ENCODE measurements at regions of chr1 and their contacts with region 1.

Region 1: DNA sequence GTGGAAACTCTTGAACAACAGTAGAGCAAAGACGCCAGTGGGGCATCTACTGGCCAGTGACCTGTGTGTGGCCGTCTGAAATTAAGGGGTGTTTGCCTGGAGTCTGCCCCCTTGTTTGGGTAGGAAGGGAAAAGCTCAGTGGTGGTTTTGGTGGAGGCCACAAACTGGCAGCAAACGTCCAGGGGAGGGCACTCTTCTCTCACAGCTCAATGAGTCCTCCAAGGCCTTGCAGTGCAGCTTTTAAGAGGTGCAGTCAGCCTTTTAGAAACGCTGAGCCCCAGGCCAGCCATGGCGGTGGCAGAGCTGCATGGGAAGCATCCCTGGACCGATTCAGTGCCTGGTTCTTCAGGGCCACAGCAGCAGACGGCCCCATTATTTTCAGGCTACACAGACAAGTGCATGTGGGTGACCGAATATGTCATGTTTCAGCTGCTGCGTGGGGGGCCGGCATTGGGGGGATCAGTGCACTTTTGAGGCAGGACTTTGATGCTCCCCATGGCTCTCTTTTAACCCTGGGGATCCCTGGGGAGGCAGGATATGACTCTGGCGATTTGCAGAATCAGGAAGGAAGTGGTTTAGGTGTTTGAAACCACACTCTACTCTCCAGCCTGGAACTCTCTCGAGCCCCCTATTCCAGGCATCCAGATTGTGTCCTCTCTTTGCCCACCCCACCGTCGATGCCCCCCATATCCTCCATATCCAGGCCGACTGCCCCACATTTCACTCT is 414.0 kb downstream of the PRDM2 start:
- DNase-seq: peak; percentile 52
- H3K4me3 ChIP-seq: no peak overlapping the region
- H3K27ac ChIP-seq: no peak overlapping the region
- H3K4me1 ChIP-seq: no peaks in the 10 kb centered on the region
- H3K27me3 ChIP-seq: no peaks in the 10 kb centered on the region
- CTCF ChIP-seq: peak; percentile 63 to 86

Region 2: DNA sequence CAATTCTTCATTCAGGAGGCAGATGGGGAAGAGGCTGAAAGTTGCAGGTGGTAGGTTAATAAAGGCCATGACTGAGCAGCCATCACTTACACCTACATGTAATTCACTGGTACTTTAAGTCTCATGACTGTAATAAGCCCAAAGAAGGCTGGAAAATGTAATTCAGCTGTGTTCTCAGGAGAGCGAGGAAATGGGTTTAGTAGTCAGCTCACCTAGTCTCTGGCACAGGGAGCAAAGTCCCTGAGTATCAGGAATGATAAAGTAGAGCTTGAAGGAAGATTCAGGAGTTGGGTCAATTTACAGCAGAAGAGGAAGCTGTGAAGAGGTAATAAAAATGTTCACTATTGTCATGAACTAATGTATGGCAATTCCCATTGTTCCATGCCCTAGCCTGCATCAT is 91.1 kb after region 1 on chr1:
- CTCF ChIA-PET with region 1: no interaction called
- dilution Hi-C with region 1: no loop called
- in situ Hi-C with region 1: no loop called
- intact Hi-C with region 1: no loop called
- DNase-seq: no peak
- H3K4me3 ChIP-seq: no peak overlapping the region
- H3K27ac ChIP-seq: no peak overlapping the region
- H3K4me1 ChIP-seq: no peaks in the 10 kb centered on the region
- H3K27me3 ChIP-seq: no peaks in the 10 kb centered on the region
- CTCF ChIP-seq: no peak

Region 3: DNA sequence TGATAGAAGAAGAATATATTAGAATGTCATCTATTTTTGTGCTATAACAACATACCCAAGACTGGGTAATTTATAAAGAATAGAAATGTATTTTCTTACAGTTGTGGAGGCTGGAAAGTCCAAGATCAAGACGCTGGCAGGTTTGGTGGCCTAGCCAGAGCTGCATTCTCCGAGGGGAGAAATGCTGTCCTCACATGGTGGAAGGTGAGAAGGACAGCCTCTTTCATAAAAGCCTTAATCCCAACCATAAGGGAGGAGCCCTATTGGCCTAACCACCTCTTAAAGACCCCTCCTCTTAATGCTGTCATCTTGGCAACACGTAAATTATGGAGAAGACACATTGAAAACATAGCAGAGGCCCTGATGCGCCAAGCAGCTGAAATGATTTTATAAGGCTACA is 424.3 kb after region 1 on chr1:
- CTCF ChIA-PET with region 1: no interaction called
- dilution Hi-C with region 1: no loop called
- in situ Hi-C with region 1: no loop called
- intact Hi-C with region 1: loop called (anchors 1 kb)
- DNase-seq: no peak
- H3K4me3 ChIP-seq: no peak overlapping the region
- H3K27ac ChIP-seq: no peak overlapping the region
- H3K4me1 ChIP-seq: no peaks in the 10 kb centered on the region
- H3K27me3 ChIP-seq: no peaks in the 10 kb centered on the region
- CTCF ChIP-seq: peak; percentile 24 to 40

Region 4: GRCh38 chr1:14598497-14599172 is 484.6 kb after region 1 on chr1 and contains the start of gene KAZN:
- CTCF ChIA-PET with region 1: no interaction called
- dilution Hi-C with region 1: no loop called
- in situ Hi-C with region 1: no loop called
- intact Hi-C with region 1: loop called (anchors 5 kb)
- DNase-seq: no peak
- H3K4me3 ChIP-seq: peak within 1 kb of the TSS in 2 of 3 experiments; percentile 8 to 27
- H3K27ac ChIP-seq: no peak within 1 kb of the TSS
- H3K4me1 ChIP-seq: peaks cover 10% of the 10 kb centered on the region
- H3K27me3 ChIP-seq: peaks cover 26% of the 10 kb centered on the region
- CTCF ChIP-seq: no peak
- total RNA-seq, gene KAZN: 13.8 to 17.6 TPM

Region 5: DNA sequence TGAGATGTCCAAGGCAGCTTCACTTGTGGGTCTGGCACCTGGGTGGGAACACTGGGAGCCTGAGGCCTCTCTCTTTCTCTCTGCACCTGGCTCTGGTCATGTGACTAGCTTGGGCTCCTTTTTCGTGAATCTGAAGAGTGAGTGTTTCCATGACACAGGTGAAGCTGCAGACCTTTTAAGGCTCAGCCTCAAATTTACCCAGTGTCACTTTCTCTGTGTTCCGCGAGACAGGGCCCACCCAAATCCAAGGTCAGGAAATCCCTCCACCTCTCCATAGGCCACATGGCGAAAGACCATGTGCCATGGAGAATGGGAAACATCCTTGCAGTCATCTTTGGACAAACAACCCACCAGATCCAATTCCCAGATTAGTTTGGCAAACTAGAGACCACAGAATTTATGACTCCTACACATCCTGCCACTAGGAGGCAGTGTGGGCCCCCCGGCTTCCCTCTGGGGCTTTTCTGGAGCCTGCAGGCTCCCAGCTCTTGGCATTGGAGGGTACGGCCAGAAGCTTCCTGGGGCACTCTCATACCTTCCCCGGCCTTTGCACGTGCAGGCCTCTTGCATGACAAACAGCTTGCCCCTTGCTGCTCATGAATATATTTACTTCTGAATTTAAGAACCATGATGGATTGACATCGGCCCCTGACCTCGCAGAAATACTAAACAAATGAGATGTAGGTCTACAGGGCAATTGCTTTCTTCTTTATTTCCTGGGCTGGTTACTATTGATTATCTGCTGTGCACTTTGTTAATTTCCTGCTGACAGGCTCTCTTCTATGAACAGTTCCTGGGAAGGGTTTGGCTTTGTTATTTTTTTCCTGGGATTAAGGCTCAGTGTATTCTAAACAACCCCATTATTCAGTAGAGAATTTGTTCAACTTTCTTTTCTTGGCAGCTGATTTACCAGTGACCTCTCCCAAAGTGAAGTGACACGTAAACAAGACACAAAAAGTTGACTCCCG is 665.2 kb after region 1 on chr1:
- CTCF ChIA-PET with region 1: no interaction called
- dilution Hi-C with region 1: no loop called
- in situ Hi-C with region 1: no loop called
- intact Hi-C with region 1: loop called (anchors 5 kb)
- DNase-seq: no peak
- H3K4me3 ChIP-seq: no peak overlapping the region
- H3K27ac ChIP-seq: no peak overlapping the region
- H3K4me1 ChIP-seq: no peaks in the 10 kb centered on the region
- H3K27me3 ChIP-seq: no peaks in the 10 kb centered on the region
- CTCF ChIP-seq: peak; percentile 72 to 78

Region 6: DNA sequence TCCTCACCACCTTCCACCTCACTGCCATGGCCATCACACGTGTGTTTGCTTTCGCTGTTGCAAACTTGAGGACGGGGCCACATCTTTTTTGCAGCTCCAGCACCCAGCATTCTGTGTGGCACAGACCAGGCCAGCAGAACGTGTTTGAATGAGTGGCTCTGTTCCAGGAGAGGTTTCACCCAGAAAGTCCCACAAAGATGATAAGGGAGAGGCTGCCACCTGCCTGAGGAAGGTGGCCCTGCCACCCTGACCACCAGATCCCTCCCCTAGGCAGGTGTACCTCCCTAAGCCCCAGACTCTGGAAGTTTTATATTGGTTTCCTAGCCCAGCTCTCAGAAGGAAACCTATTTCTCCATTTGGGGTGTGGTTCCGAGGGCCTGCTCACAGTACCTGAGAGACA is 736.6 kb after region 1 on chr1:
- CTCF ChIA-PET with region 1: no interaction called
- dilution Hi-C with region 1: no loop called
- in situ Hi-C with region 1: no loop called
- intact Hi-C with region 1: loop called (anchors 1 kb)
- DNase-seq: no peak
- H3K4me3 ChIP-seq: no peak overlapping the region
- H3K27ac ChIP-seq: no peak overlapping the region
- H3K4me1 ChIP-seq: no peaks in the 10 kb centered on the region
- H3K27me3 ChIP-seq: no peaks in the 10 kb centered on the region
- CTCF ChIP-seq: peak in 1 of 2 donors; percentile 46

Region 7: DNA sequence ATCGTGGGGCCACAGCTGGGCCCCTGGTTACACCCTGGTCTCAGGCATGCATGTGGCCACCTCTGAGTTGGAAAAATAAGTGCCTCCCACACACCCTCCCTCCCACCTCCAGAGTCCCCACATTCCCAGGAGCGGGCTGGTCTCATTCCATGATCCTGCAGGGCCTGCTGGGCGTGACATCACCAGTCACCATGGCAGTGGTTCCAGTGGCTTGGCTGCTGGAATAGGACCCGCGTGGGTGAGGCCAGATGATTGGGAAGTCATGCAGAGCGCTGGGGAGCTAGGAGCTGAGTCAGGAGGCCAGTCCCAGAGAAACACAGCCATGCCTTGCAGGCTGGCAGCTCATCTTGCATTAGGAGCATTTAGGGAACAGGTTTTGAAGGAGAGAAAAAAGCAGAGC is 914.1 kb after region 1 on chr1:
- CTCF ChIA-PET with region 1: no interaction called
- dilution Hi-C with region 1: no loop called
- in situ Hi-C with region 1: loop called (anchors 25 kb)
- intact Hi-C with region 1: loop called (anchors 5 kb)
- DNase-seq: peak; percentile 61
- H3K4me3 ChIP-seq: no peak overlapping the region
- H3K27ac ChIP-seq: peak overlapping the region; percentile 41
- H3K4me1 ChIP-seq: peaks cover 30% of the 10 kb centered on the region
- H3K27me3 ChIP-seq: no peaks in the 10 kb centered on the region
- CTCF ChIP-seq: no peak

Region 8: DNA sequence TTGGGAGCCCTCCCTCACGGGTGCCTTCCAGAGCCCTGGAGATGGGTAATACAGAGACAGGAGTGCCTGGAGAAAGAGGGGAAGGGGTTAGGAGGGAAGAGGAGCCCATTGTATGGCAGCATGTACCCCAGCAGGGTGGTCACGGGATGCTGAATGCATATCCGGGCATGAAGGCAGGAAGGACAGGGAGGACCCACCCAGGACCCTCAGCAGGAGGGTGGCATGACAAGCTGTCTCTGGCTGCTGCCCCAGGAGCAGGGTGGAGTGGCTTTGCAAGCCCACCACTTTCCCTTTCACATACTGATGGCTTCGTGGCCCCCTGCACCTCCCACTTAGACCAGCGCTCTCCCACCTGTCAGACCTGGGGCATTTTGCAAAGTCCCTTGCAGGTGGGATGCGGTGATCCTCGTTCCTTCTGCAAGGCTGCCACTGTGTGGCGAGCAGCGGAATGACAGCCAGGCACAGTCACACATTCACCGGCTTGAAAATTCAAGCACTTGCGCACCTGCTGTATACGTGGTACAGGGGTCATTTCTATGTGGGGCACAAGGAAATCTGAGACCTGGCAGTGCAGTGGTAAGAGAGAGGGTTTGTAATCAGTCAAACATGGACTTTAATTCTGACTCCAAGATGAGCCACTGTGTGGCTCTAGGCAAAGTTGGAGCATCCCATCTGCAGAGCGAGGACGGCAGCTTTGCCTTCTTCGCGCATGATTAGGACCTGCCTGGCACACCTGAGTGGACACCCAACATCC is 986.3 kb after region 1 on chr1:
- CTCF ChIA-PET with region 1: no interaction called
- dilution Hi-C with region 1: no loop called
- in situ Hi-C with region 1: loop called in 1 of 2 experiments (anchors 10 kb)
- intact Hi-C with region 1: loop called (anchors 1 kb)
- DNase-seq: peak; percentile 14
- H3K4me3 ChIP-seq: no peak overlapping the region
- H3K27ac ChIP-seq: no peak overlapping the region
- H3K4me1 ChIP-seq: no peaks in the 10 kb centered on the region
- H3K27me3 ChIP-seq: no peaks in the 10 kb centered on the region
- CTCF ChIP-seq: peak; percentile 98